BJ (cell line): ENCODE measurements at regions of chr6 and their contacts with region 1.

Region 1: DNA sequence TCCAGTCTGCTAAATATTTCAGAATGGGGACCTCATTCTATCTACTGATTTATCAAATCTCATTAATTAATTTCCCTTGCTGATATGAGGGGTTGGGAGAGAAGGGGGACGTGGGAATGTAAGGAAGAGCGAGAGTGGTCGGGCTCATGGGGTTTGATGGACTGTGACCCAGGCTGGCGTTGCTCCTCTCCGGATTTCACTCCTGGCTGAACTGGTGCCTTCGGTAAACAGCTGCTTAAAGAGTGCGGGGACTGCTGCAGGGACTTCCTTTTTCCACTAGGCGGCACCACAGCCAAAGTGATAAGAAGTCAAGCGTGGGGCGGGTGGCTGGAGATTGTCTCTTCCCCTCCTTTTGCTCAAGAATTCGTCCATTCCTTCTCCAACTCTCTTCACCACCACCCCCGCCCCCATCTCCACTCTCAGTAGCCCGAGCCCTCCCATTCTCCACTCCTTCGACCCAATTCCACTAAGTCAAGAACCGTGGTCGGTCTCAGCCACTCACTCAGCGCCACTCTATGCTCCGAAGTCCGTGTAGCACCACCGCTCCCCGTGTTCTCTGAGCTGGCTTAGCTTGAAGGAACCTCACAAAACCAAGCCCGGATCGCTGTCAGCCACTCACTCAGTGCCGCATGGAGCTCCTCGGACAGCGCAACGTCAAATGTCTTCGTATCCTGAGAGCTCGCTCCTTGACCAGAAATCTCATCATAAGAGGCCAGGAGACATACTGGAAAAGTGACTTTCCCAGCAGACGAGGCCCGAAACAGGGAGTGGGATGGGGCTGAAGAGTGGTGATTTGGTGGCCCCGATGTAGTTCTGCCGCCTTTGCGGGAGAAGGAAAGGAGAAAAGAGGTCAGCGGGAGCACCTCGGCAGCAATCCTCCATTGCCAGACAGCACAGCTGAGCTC is 9.7 kb downstream of the TRIM31 start:
- DNase-seq: peak; percentile 33
- H3K4me3 ChIP-seq: peak overlapping the region; percentile 46
- H3K27me3 ChIP-seq: peaks cover 31% of the 10 kb centered on the region
- CTCF ChIP-seq: peak; percentile 89

Region 2: DNA sequence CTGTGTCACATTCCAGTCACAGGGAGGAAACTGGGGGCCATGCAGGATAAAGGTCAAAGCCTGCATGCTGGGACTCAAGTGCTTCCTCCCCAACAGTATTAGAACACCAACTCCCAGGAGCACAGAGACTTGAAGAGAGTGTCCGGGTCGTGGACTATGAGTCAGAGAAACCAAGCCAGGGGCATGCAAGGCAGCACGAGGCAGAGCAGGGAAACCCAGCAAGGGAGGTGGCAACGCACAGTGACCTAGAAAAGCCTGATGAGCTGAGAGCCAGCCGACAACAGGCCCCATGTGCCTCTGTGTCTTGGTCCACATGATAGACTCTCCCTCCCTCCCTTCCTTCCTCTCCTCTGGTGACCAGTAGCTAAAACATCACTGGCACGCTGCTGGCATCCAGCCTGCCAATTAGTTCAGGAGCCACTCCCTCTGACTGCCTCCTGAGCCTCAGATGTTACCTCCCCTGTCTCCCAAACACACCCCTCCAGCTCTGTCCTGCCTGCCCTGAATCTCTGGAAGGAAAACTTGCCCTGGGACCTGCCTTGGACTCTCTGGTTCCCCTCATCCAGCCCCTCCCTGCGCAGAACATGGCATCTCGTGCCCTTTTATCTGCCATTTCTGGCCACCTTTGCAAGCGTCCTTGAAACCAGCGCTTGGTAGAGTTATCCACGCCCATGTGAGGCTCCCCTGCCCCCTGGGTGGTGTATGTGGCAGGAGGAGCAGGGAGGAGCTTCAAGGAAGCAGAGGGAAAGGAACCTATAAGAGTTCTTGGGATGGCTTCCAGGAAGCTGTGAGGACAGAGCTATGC is 11.4 kb before region 1 on chr6:
- CTCF ChIA-PET with region 1: interaction called, 21 read pairs
- POLR2A ChIA-PET with region 1: no interaction called
- DNase-seq: peak; percentile 39
- H3K4me3 ChIP-seq: no peak overlapping the region
- H3K27me3 ChIP-seq: peaks cover 9% of the 10 kb centered on the region
- CTCF ChIP-seq: no peak

Region 3: DNA sequence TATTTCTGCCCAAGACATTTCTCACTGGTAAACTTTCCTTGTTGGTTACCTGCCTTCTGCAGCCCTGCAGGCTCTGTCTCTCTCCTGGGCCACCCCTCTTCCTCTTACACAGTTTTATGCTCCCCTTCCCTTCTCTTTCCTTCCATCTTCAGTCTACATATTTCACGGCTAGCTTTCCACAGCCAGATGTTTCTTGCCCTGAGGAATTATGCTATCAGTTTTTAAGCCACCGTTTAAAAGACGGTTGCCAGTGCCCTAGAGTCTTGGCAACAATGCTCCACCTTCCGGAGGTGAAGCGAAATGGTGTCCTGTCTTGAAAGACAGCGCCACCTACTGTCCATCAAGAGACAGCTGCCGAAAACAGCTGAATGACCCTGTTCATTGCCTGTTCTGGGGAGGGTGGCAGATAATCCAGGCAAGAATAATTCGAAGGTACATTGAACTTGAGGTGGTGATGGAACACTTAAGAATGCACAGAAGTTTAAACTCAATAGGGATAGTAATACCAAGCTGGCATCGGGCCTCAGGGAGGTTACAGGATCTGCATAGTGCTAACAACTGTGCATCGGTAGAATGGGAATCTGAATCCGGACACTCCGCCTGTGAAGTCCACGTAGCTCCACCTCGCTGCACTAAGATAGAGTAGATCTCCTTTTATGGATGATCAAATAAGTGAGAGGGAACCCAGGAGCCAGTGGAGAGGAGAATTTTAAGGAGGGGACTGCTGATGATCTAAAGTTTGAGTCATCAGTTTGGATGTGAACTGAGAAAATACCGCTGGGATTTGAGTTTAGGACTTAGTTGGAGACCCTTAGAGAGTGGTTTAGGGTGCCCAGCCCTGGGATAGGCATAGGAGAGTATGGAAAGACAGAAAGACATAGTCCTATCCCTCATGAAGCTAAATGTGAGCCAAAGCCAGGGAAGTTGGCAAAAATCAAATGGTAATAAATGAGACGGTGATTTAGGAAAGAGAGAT is 28.0 kb after region 1 on chr6:
- CTCF ChIA-PET with region 1: interaction called, 199 read pairs
- POLR2A ChIA-PET with region 1: no interaction called
- DNase-seq: no peak
- H3K4me3 ChIP-seq: no peak overlapping the region
- H3K27me3 ChIP-seq: peaks cover 27% of the 10 kb centered on the region
- CTCF ChIP-seq: peak; percentile 99

Region 4: GRCh38 chr6:30136570-30137286 is 33.5 kb after region 1 on chr6:
- CTCF ChIA-PET with region 1: interaction called, 199 read pairs
- POLR2A ChIA-PET with region 1: no interaction called
- DNase-seq: no peak
- H3K4me3 ChIP-seq: no peak overlapping the region
- H3K27me3 ChIP-seq: peaks cover 9% of the 10 kb centered on the region
- CTCF ChIP-seq: no peak

Region 5: DNA sequence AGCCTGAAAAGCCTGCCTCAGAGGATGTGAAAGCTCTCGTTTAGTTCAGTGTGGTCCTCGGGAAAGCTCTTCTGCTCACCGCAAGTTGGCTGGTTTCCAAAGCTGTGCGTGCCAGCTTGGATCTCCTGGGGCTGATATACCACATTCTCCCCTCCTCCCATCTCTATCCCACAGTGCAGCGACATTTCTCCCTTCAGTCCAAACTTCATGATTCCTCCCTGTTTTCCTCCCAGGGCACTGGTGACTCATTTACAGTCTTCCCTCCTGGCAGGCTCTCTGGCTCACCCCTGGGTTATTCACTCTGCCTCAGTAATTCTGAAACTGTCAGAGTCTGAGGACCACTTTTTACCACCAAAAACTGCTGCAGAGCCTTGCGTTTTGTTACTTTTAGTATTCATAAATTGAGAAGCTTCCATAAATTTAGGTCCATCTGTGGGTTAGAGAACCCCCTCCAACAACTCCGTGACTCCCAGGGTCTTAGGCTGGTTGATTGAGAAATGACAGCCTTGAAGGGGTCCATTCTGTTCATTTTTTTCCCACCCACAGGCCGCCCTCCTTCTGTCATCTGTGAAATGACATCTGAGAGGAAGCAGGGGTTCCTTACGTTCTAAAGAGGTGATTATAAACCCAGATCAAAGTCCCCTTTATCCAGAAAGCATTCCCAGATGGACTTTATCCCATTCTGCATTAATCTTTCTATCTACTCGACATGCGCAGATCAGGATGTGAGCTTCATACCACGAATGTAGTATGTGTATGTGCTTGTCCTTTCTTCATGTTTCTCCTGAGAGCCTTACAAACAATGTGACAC is 51.7 kb after region 1 on chr6:
- CTCF ChIA-PET with region 1: interaction called, 10 read pairs
- POLR2A ChIA-PET with region 1: no interaction called
- DNase-seq: peak; percentile 51
- H3K4me3 ChIP-seq: no peak overlapping the region
- H3K27me3 ChIP-seq: peaks cover 2% of the 10 kb centered on the region
- CTCF ChIP-seq: no peak

Region 6: DNA sequence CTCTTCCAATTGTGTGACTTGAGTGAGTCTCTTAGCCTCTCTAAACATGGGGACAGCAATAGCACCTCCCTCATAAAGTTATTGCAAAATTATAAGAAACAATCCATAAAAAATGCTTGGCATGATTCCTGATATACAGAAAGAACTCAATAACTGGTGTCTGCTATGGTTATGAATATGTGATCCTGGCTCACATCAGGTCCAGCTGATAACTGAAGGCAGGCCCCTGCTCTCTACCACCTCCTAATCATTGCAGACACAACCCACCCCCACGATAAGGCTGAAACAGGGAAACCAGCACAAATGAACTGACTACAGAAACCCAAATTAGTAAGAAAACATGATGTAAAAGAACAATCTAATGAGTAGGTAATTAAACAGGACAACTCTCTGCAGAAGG is 65.5 kb after region 1 on chr6:
- CTCF ChIA-PET with region 1: interaction called, 10 read pairs
- POLR2A ChIA-PET with region 1: no interaction called
- DNase-seq: no peak
- H3K4me3 ChIP-seq: no peak overlapping the region
- H3K27me3 ChIP-seq: peaks cover 35% of the 10 kb centered on the region
- CTCF ChIP-seq: no peak